ENCODE measurements at regions of chr12 and their contacts with region 1.

Region 1: DNA sequence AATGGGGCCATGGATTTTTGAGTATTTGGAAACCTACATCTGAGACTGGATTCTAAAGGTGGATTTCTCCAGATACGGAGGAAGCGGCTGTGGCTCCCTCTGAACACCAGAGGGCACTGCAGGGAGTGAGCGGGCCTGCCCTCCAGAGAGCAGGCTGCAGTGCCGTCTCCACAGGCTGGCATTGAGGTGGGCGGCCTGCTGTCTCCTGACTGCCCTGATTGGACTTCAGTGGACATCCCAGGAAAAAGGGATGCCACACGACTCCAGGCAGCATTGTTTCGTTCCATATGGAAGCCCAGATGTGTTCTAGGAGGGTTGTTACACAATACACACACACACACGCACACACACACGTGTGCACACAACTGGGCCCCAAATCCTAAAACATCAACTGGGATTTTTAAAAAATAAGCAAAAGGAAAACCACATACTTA is 20.9 kb upstream of the ANO2 start:
- DNase-seq: no peak
- H3K4me3 ChIP-seq: no peak overlapping the region
- H3K27ac ChIP-seq: no peak overlapping the region
- H3K4me1 ChIP-seq: no peaks in the 10 kb centered on the region
- H3K27me3 ChIP-seq: no peaks in the 10 kb centered on the region
- CTCF ChIP-seq: peak in 3 of 4 experiments; percentile 48 to 79 (median 60)
- EP300 ChIP-seq: no peak
- POLR2A ChIP-seq: no peak

Region 2: DNA sequence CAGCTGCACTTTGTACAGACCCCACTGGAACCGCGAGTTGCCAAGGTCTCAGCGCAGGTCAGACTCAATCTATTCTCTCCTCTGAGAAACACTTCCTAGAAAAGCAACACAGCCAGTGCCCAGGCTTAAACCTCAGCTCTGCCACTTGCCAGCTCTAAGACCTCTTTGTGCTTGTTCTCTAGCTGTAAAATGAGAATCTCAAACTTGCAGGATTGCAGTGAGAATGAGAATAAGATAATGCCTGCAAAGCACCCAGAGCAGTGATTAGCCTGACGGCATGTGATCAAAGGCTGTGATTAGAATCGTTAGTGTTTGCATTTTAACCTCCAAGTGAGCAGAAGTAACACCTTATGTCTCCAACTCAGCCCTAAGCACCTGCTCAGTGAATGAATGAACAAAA is 42.2 kb before region 1 on chr12:
- intact Hi-C with region 1: no loop called
- DNase-seq: peak; percentile 8
- H3K4me3 ChIP-seq: no peak overlapping the region
- H3K27ac ChIP-seq: no peak overlapping the region
- H3K4me1 ChIP-seq: no peaks in the 10 kb centered on the region
- H3K27me3 ChIP-seq: no peaks in the 10 kb centered on the region
- CTCF ChIP-seq: no peak
- EP300 ChIP-seq: no peak
- POLR2A ChIP-seq: no peak

Region 3: GRCh38 chr12:6039894-6040568 is 74.1 kb after region 1 on chr12:
- intact Hi-C with region 1: loop called (anchors 2 kb)
- DNase-seq: peak; percentile 69
- H3K4me3 ChIP-seq: no peak overlapping the region
- H3K27ac ChIP-seq: no peak overlapping the region
- H3K4me1 ChIP-seq: no peaks in the 10 kb centered on the region
- H3K27me3 ChIP-seq: no peaks in the 10 kb centered on the region
- CTCF ChIP-seq: peak; percentile 70 to 93 (median 89)
- EP300 ChIP-seq: no peak
- POLR2A ChIP-seq: no peak

Measured in sigmoid colon (tissue), 7 donors.